ENCODE measurements at regions of chr1 and their contacts with region 1.

Region 1: GRCh38 chr1:165914136-165914798 is 86.9 kb downstream of the UCK2 start:
- DNase-seq: peak in 2 of 4 donors; percentile 70 to 84
- ATAC-seq: peak; percentile 84
- H3K4me3 ChIP-seq: no peak overlapping the region
- H3K27ac ChIP-seq: no peak overlapping the region
- H3K4me1 ChIP-seq: peaks cover 0 to 14% of the 10 kb centered on the region in 2 donors
- H3K27me3 ChIP-seq: no peaks in the 10 kb centered on the region
- CTCF ChIP-seq: peak; percentile 74 to 82

Region 2: GRCh38 chr1:165392634-165393571 is 521.4 kb before region 1 on chr1:
- intact Hi-C with region 1: loop called in 1 of 2 experiments (anchors 5 kb)
- DNase-seq: peak; percentile 64 to 92 (median 88)
- ATAC-seq: peak; percentile 99
- H3K4me3 ChIP-seq: no peak overlapping the region
- H3K27ac ChIP-seq: no peak overlapping the region
- H3K4me1 ChIP-seq: peaks cover 0 to 12% of the 10 kb centered on the region in 2 donors
- H3K27me3 ChIP-seq: peaks cover 20 to 96% of the 10 kb centered on the region in 2 donors
- CTCF ChIP-seq: peak; percentile 88 to 94

Region 3: DNA sequence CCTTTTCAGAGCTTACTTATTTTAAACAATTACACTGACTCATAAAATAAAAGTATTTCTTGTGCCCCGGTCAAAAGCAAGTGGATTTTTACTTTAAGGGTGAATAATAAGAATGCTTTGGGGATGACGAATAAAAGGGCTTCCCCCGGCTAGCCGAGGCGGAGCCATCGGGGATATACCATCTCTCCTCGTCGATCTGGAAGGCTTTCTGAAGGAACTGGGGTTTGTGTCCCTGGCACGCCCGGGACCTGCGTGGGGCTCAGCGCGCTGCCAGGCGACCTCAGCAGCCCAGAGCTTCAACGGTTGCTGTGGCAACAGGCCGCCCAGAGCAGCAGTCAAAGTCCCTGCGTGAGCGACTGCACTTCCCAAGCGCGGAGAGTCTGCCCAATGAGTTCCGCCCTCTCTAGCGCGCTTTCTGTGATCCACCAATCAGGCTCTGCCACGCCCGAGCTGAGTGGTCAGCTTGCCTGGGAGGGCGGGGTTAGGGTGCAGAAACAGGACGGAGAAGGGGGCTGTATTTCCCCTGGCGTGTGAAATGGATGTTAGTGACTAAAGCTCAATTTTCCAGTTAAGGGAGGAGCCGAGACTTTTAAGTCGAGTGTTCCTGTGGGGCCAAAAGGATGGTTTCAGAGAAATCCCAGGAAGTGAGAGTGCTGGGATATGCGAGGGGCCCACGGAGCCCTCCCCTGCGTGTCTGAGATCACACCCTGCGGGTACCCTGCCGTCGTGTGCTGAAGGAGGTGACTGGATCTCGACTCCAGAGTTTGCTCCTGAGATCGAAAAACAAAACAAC is 316.2 kb before region 1 on chr1:
- intact Hi-C with region 1: loop called in 1 of 2 experiments (anchors 10 kb)
- DNase-seq: peak; percentile 94 to 98 (median 97)
- ATAC-seq: peak; percentile 99
- H3K4me3 ChIP-seq: peak overlapping the region; percentile 45 to 47
- H3K27ac ChIP-seq: peak overlapping the region; percentile 54 to 88
- H3K4me1 ChIP-seq: peaks cover 0 to 23% of the 10 kb centered on the region in 2 donors
- H3K27me3 ChIP-seq: peaks cover 9 to 29% of the 10 kb centered on the region in 2 donors
- CTCF ChIP-seq: no peak

Region 4: DNA sequence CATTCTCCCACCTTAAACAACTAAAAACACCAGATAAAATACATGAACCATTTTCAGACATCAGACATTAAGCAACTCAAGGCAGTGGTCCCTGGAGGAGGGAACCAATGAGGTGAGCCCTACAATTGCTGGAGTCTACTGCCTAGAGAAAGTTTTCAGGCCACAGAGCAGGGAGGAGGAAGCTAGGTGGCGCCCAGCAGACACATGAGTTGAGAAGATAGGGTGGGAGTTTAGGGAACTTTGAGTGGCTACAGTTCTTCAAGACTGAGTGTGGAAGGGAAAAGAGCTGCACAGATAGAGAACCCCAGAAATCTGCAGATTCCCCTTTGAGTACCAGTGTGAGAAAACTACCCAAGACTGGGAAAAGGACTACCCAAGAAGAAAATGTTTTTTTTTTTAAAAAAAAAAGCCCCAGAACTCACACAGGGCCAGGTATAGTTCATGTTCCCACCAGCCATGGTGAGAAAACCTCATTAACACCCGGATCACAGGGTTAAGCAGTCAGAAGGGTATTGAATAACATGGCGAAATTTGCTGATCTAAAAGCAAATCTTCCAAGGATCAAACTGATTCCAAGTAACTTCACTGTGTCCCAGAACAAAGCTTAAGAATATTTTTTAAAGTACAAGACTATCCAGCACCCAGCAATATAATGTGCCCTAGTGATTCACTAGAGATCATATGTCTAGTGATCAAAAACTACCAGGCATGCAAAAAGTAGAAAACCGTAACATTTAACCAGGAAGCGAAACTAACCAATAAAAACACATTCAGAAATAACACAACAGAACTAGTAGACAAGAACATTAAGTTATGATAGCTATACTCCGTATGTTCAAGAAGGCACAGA is 227.9 kb before region 1 on chr1:
- intact Hi-C with region 1: no loop called
- DNase-seq: no peak
- ATAC-seq: peak; percentile 36
- H3K4me3 ChIP-seq: no peak overlapping the region
- H3K27ac ChIP-seq: no peak overlapping the region
- H3K4me1 ChIP-seq: peaks cover 0 to 10% of the 10 kb centered on the region in 2 donors
- H3K27me3 ChIP-seq: no peaks in the 10 kb centered on the region
- CTCF ChIP-seq: no peak

Region 5: DNA sequence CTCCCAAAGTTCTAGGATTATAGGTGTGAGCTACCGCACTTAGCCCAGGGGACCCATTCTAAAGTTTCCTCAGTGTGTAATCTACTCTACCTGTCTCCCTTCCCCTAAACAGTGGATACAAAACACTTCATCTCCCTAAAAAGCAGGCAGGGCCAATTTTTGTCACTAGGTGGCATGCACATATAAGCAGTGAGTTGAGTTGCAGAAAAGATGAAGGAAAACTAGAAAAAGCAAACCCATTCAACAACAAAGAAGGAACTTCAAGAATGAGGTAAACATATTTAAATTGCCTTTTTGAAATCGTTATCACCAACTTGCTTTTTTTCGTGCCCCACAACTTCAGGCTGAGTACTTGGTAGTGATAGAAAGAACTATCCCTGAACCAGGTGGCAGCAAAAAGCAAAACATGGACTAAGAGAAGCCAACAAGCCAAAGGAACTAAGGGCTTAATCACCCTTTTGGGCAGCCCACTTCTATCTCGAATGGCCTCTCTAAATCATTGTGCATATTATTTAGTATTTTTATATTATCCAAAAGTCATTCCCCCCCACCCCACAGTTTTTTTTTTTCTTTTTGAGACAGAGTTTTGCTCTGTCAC is 196.2 kb before region 1 on chr1:
- intact Hi-C with region 1: loop called in 1 of 2 experiments (anchors 5 kb)
- DNase-seq: peak in 2 of 4 donors; percentile 36 to 55
- ATAC-seq: peak; percentile 73
- H3K4me3 ChIP-seq: no peak overlapping the region
- H3K27ac ChIP-seq: no peak overlapping the region
- H3K4me1 ChIP-seq: no peaks in the 10 kb centered on the region
- H3K27me3 ChIP-seq: no peaks in the 10 kb centered on the region
- CTCF ChIP-seq: peak in 1 of 2 donors; percentile 54

Measured in left lung (tissue), 14 donors.